ENCODE measurements at regions of chr18 and their contacts with region 1.

Region 1: DNA sequence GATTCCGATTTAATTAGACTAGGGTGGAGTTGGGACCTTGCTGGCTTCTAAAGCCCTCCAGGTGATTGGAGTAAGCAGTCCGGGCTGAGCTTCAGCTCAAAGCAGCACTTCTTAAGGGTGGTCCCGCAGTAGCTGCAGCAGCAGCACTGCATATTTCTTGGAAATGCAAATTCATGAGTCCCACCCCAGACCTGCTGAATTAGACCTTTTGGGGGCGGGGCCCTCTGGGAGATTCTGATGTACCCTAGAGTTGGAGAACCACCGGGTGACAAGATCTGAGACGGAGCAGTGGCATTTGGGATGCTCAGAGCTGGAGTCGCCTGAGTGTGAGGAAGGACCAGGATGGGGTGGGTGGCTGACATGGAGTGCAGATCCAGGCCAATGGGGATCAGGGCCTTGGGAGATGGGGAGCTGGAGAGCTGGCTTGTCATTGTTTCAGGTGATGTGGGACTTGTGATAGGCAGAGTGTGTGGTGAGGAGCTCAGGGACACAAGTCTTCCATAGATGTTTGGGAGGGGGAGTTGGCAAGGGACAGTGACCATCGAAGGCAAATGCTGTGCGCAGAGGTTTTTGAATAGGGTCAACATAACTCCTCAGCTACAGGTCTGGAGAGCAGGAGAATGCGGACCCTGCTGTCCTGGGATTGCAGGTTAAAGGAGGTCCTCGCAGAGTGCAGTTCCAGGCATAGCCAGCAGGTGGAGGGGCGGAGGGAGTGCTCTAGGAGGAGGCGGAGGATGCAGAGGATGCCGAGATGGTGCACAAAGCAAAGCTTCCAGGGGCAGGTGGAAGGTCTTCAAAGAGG is 130.9 kb upstream of the RAB12 start:
- DNase-seq: peak; percentile 34
- ATAC-seq: peak; percentile 95
- H3K4me3 ChIP-seq: no peak overlapping the region
- H3K27ac ChIP-seq: no peak overlapping the region
- H3K4me1 ChIP-seq: no peaks in the 10 kb centered on the region
- H3K27me3 ChIP-seq: peaks cover 25% of the 10 kb centered on the region
- CTCF ChIP-seq: peak; percentile 67
- POLR2A ChIP-seq: no peak
- RAD21 ChIP-seq: peak; percentile 58

Region 2: DNA sequence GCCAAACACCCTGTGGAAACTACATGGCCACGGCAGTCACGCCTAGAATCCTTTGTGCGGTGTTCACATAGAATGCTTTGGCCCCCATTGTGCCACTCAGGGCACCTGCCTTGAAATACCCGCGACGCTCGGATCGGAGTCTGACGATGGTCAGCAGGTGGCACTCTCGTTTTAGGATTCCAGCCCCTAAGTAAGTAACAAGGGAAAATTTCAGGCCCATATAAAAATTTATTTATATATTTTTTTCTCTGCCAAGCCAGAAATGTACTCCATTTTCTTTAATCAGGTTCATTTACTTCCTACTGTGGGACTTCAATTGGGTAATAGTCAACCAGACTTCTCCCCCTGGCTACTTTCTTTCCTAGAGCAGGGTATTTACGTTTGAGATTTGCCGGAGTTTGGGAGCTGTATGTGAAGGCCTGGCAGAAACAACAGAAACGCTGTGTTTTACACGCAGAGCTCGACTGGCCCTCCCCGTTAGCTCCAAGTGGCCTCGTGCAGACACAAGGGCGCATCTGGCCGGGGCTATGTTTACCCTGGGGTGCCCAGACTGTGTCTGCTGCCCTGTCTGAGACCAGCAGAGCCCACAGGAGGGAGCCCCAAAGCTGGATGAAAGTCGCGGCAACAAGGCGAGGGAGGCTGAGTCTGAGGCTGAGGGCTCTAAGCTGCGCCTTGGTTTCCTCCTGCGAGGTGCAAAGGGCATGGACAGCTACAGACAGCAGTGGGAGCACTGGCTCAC is 1205.9 kb before region 1 on chr18:
- CTCF ChIA-PET with region 1: interaction called, 4 read pairs
- POLR2A ChIA-PET with region 1: no interaction called
- dilution Hi-C with region 1: no loop called
- in situ Hi-C with region 1: no loop called
- intact Hi-C with region 1: loop called (anchors 1 kb)
- DNase-seq: peak; percentile 61
- ATAC-seq: peak; percentile 87
- H3K4me3 ChIP-seq: no peak overlapping the region
- H3K27ac ChIP-seq: no peak overlapping the region
- H3K4me1 ChIP-seq: peaks cover 4% of the 10 kb centered on the region; the same call in 1 of the 2 replicates
- H3K27me3 ChIP-seq: no peaks in the 10 kb centered on the region; the same call in 1 of the 2 replicates
- CTCF ChIP-seq: peak; percentile 57
- POLR2A ChIP-seq: no peak
- RAD21 ChIP-seq: peak; percentile 67

Region 3: DNA sequence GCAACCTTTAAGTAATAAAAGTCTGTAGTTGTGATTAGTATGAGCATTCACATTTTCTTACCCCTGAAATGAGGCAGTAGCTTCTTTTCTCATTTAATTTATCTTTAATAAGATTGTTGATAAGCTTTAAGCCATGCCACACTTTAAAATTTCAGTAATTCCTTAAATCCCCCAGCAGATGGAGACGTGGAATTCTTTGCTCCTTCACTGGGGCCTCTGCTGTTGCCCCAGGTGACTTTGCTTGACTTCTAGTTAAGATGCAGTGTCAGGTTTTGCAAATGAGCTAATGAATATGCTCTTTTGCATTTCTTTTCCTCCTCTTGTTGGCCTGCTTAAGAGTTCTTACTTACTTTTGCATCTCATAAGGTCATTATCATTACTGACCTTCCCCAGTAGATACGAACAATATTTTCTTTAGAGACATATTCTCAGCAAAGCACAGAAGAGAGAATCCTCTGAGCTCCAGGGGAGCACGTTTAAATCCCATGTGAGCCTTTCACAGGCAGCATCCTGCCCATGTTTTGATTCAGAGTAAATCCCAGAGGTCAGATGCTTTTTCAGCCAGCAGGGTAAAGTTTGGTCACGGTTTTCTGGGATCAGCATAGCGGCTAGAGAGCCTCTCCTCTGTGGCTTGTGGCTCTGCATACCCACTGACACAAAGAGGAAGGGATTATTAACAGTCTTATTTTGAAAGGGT is 688.4 kb before region 1 on chr18:
- CTCF ChIA-PET with region 1: no interaction called
- POLR2A ChIA-PET with region 1: no interaction called
- dilution Hi-C with region 1: no loop called
- in situ Hi-C with region 1: no loop called
- intact Hi-C with region 1: loop called (anchors 2 kb)
- DNase-seq: peak; percentile 55
- ATAC-seq: peak; percentile 81
- H3K4me3 ChIP-seq: no peak overlapping the region
- H3K27ac ChIP-seq: no peak overlapping the region
- H3K4me1 ChIP-seq: no peaks in the 10 kb centered on the region
- H3K27me3 ChIP-seq: no peaks in the 10 kb centered on the region
- CTCF ChIP-seq: peak; percentile 61
- POLR2A ChIP-seq: no peak
- RAD21 ChIP-seq: peak; percentile 79

Region 4: DNA sequence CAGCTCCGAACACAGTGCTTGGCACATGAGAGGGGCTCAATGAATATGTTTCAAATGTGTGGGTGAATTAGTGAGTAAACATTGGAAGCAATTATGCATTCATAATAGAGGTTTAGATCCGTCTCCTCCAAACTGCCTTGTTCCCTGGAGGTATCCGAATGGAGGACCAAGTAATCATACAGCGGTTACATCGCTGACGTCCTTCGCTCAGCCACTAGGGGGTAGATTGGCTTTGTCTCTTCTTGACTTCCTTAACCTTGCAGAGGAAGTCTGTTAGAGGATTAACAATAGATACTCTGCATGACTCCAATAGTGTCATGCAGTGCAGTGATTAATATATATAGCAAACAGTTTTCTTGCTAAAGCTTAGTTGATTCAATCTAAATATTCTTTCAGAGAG is 394.2 kb before region 1 on chr18:
- CTCF ChIA-PET with region 1: no interaction called
- POLR2A ChIA-PET with region 1: no interaction called
- dilution Hi-C with region 1: no loop called
- in situ Hi-C with region 1: no loop called
- intact Hi-C with region 1: loop called (anchors 5 kb)
- DNase-seq: peak; percentile 46
- ATAC-seq: peak; percentile 80
- H3K4me3 ChIP-seq: no peak overlapping the region
- H3K27ac ChIP-seq: no peak overlapping the region
- H3K4me1 ChIP-seq: no peaks in the 10 kb centered on the region
- H3K27me3 ChIP-seq: no peaks in the 10 kb centered on the region
- CTCF ChIP-seq: peak; percentile 52
- POLR2A ChIP-seq: no peak
- RAD21 ChIP-seq: peak; percentile 65

Region 5: GRCh38 chr18:8450013-8450412 is 28.4 kb before region 1 on chr18:
- CTCF ChIA-PET with region 1: no interaction called
- POLR2A ChIA-PET with region 1: no interaction called
- dilution Hi-C with region 1: no loop called
- in situ Hi-C with region 1: no loop called
- intact Hi-C with region 1: no loop called
- DNase-seq: no peak
- ATAC-seq: no peak
- H3K4me3 ChIP-seq: no peak overlapping the region
- H3K27ac ChIP-seq: no peak overlapping the region
- H3K4me1 ChIP-seq: no peaks in the 10 kb centered on the region
- H3K27me3 ChIP-seq: peaks cover 9% of the 10 kb centered on the region
- CTCF ChIP-seq: peak; percentile 23; the same call in 1 of the 2 replicates
- POLR2A ChIP-seq: no peak
- RAD21 ChIP-seq: no peak

Region 6: DNA sequence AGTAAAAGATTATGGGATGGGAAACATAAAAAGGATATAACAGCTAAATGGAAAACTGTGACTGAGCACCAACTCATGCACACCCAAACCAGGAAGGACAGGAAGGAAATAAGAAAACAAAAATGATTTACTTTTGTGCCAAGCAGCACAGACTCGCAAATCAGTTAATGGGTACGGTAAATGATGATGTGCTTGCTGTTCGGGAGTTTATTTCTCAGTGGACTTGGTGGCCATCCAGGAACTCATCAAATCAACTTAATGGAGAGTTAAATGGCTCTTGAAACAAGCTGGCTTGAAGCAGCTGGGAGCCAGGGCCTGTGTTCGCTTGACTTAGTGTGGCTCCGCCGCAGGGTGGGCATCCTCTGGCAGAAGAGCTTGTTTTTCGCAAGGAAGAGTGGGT is 263.2 kb after region 1 on chr18:
- CTCF ChIA-PET with region 1: no interaction called
- POLR2A ChIA-PET with region 1: no interaction called
- dilution Hi-C with region 1: no loop called
- in situ Hi-C with region 1: no loop called
- intact Hi-C with region 1: no loop called
- DNase-seq: no peak
- ATAC-seq: no peak
- H3K4me3 ChIP-seq: no peak overlapping the region
- H3K27ac ChIP-seq: no peak overlapping the region
- H3K4me1 ChIP-seq: peaks cover 21% of the 10 kb centered on the region
- H3K27me3 ChIP-seq: no peaks in the 10 kb centered on the region
- CTCF ChIP-seq: no peak
- POLR2A ChIP-seq: no peak
- RAD21 ChIP-seq: no peak